ENCODE measurements at regions of chr4 and their contacts with region 1.

Region 1: GRCh38 chr4:66123190-66123589 is 452.9 kb upstream of the EPHA5 start:
- DNase-seq: no peak
- ATAC-seq: no peak
- H3K4me3 ChIP-seq: no peak overlapping the region
- H3K27ac ChIP-seq: no peak overlapping the region
- H3K4me1 ChIP-seq: no peaks in the 10 kb centered on the region
- H3K27me3 ChIP-seq: no peaks in the 10 kb centered on the region
- CTCF ChIP-seq: no peak

Region 2: GRCh38 chr4:65924843-65925242 is 198.3 kb before region 1 on chr4:
- intact Hi-C with region 1: no loop called
- DNase-seq: no peak
- ATAC-seq: no peak
- H3K4me3 ChIP-seq: no peak overlapping the region
- H3K27ac ChIP-seq: no peak overlapping the region
- H3K4me1 ChIP-seq: no peaks in the 10 kb centered on the region
- H3K27me3 ChIP-seq: no peaks in the 10 kb centered on the region
- CTCF ChIP-seq: no peak

Region 3: GRCh38 chr4:66091786-66092185 is 31.4 kb before region 1 on chr4:
- intact Hi-C with region 1: loop called in 1 of 10 experiments (anchors 2 kb)
- DNase-seq: no peak
- ATAC-seq: no peak
- H3K4me3 ChIP-seq: no peak overlapping the region
- H3K27ac ChIP-seq: no peak overlapping the region
- H3K4me1 ChIP-seq: no peaks in the 10 kb centered on the region
- H3K27me3 ChIP-seq: no peaks in the 10 kb centered on the region
- CTCF ChIP-seq: no peak

Measured in heart right ventricle (tissue), 16 donors.